Left ventricle myocardium superior (tissue), 1 donor: ENCODE measurements at regions of chr14 and their contacts with region 1.

Region 1: GRCh38 chr14:34673702-34674101 is 40.7 kb downstream of the CFL2 start:
- DNase-seq: no peak
- ATAC-seq: no peak

Region 2: DNA sequence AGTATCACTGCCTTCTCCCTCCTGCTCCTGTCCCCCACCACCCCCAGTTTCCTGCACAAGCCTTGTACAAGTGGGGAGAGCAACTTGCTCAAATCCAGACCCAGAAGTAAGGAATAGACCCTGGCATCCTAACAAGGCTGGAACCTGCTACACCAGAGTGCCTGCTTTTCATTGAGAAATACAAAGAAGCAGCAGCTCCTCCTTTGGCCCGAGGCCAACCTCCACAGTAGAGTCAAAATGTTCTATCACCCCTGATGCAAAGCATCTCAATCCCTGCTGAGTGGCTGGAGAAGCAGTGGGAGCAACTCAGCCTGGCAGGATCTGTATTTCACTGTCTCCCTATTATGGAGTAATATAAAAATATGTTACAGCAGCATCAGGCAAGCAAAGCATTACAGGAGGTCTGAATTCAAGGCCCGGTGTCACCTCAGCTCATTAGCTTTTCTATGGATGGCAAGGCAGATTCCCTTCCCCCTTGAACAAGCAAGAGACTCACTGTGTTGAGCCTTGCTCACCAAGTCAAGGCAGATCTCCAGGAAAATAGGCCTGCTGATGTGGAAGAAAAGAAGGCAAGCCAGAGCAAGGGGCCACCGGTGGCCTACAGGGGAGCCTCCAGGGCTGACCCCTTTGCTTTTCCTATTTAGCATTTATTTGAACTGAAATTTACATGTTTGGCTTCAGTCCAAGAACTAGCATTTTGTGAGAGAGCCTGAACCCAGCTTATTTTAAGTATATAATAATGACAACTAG is 536.5 kb before region 1 on chr14:
- intact Hi-C with region 1: no loop called
- DNase-seq: no peak
- ATAC-seq: no peak

Region 3: GRCh38 chr14:34722717-34723545 is 49.2 kb after region 1 on chr14:
- intact Hi-C with region 1: loop called (anchors 2 kb)
- DNase-seq: no peak
- ATAC-seq: peak; percentile 73